Astrocyte of the cerebellum (primary cell): ENCODE measurements at regions of chr2 and their contacts with region 1.

Region 1: DNA sequence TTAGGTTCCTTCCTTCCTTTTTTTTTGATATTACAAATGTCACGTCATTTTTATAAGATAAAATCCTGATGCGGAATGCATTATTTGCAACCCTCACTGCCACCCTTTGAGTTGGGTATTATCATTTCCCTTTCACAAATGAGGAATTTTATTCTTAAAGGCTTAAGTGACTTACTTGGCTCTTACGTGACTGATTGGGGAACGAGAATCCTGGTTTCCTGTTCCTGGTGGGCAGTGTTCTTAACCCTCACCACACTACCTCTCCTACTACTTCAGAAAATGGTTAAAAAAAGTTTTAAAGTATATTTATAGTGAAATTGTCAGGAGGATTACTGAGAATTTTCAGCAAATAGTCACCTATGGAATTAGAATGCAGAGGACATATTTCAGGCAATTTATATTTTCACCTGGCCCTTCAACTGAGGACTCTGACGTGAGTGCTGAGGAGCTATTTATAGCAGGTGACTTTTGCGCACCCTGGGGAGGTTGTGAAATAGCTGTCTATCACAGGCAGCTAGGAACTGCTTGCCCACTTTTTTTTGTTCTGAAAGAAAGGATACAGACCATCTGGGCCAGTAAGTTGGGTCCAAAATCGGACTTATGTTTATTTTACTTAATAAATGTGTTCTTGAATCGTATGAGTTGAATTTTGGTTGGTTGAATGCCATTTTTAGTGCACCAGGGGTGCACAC is 18.7 kb upstream of the RASGRP3 start:
- DNase-seq: no peak
- H3K4me3 ChIP-seq: no peak overlapping the region
- CTCF ChIP-seq: no peak

Region 2: GRCh38 chr2:32988525-32988924 is 469.2 kb before region 1 on chr2:
- in situ Hi-C with region 1: no loop called
- DNase-seq: no peak
- H3K4me3 ChIP-seq: no peak overlapping the region
- CTCF ChIP-seq: no peak

Region 3: GRCh38 chr2:33395655-33396249 is 62.0 kb before region 1 on chr2:
- in situ Hi-C with region 1: loop called (anchors 10 kb)
- DNase-seq: no peak
- H3K4me3 ChIP-seq: no peak overlapping the region
- CTCF ChIP-seq: peak; percentile 65

Region 4: GRCh38 chr2:33775306-33775705 is 317.6 kb after region 1 on chr2:
- in situ Hi-C with region 1: no loop called
- DNase-seq: no peak
- H3K4me3 ChIP-seq: no peak overlapping the region
- CTCF ChIP-seq: no peak